Sciatic nerve (tissue), 2 donors: ENCODE measurements at regions of chr6 and their contacts with region 1.

Region 1: DNA sequence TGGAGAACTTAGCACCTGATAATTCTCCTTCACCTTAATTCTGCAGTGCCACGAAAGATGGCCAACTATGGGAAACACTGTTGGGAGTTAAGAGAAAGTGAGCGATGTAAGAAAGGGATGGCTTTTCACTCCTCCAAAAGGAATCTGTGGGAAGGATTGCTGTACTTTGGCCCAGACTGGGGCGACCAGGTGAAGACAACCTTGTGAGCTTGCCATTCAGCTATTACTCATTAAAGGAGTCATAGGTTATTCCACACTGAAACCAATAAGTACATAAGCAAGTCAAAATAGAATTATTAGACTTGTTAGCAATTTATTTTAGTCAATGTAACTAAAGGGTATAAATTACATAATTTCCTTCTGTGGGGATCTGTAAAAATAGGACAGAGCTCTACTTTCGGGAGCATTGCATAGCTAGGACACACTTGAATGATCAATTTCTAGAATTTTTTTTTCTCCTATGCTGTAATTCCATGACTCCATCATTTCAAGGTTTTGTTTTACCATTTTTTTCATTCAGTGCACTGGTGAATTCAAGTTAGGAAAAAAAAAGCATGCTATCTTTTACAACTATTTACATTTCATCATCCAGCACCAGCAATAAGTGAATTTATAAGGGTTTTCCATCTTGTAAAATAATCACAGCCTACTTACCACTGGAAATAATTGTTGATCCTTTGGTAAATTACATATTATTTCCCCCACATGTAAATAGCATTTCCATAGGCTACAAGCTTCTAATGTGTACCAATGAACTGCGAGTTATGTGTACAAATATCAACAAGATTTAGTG is 231.7 kb downstream of the SIM1 start:
- DNase-seq: no peak
- ATAC-seq: no peak

Region 2: GRCh38 chr6:99016355-99016754 is 1216.6 kb before region 1 on chr6:
- intact Hi-C with region 1: no loop called
- DNase-seq: no peak
- ATAC-seq: no peak

Region 3: GRCh38 chr6:100165442-100165841 is 67.5 kb before region 1 on chr6:
- intact Hi-C with region 1: loop called (anchors 2 kb)
- DNase-seq: no peak
- ATAC-seq: no peak